ENCODE measurements at regions of chr13 and their contacts with region 1.

Region 1: DNA sequence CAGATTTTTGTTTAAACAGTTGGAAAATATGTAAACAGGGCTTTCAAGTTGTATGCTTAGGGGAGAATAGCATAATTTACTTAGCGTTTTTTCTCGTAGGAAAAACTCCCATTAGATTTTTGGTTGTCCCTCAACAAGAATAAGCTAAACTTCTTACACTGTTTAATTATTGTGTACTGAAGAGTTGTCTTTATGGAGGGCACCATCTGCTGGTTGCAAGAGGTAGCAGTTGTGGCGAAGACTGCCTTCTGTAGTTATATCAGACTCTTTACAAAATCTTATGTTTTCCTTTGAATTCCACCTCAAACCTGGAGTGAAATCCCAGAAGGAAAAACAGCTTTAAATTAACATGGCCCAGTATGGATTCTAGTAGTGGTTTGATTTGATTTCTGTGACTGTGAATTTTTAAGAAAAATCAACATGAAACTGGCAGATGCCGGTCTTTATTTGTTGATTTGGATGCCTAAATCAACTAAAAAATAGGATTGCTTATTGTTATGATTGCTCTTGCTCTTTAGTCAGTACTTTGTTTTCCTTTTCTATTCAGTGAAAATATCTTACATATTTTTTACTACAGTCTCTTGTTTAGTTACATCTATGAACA is 53.4 kb downstream of the PDS5B start:
- DNase-seq: peak; percentile 57
- ATAC-seq: peak; percentile 64
- H3K4me3 ChIP-seq: no peak overlapping the region
- H3K27ac ChIP-seq: no peak overlapping the region
- H3K4me1 ChIP-seq: peaks cover 16% of the 10 kb centered on the region
- H3K27me3 ChIP-seq: no peaks in the 10 kb centered on the region
- CTCF ChIP-seq: peak; percentile 81

Region 2: GRCh38 chr13:32159137-32159869 is 480.3 kb before region 1 on chr13:
- CTCF ChIA-PET with region 1: no interaction called
- POLR2A ChIA-PET with region 1: no interaction called
- intact Hi-C with region 1: no loop called
- DNase-seq: no peak
- ATAC-seq: no peak
- H3K4me3 ChIP-seq: no peak overlapping the region
- H3K27ac ChIP-seq: no peak overlapping the region
- H3K4me1 ChIP-seq: peaks cover 12% of the 10 kb centered on the region; the same call in 1 of the 2 replicates
- H3K27me3 ChIP-seq: no peaks in the 10 kb centered on the region
- CTCF ChIP-seq: no peak

Region 3: GRCh38 chr13:32538621-32539246 is 100.9 kb before region 1 on chr13 and contains the start of gene N4BP2L2:
- CTCF ChIA-PET with region 1: no interaction called
- POLR2A ChIA-PET with region 1: no interaction called
- intact Hi-C with region 1: loop called (anchors 5 kb)
- DNase-seq: peak; percentile 95
- ATAC-seq: peak; percentile 99
- H3K4me3 ChIP-seq: peak within 1 kb of the TSS; percentile 85
- H3K27ac ChIP-seq: peak within 1 kb of the TSS; percentile 65
- H3K4me1 ChIP-seq: peaks cover 20% of the 10 kb centered on the region; the same call in 1 of the 2 replicates
- H3K27me3 ChIP-seq: no peaks in the 10 kb centered on the region
- CTCF ChIP-seq: peak; percentile 45; the same call in 1 of the 2 replicates
- total RNA-seq, gene N4BP2L2: 31.7 and 51.4 TPM in 2 replicates

Region 4: DNA sequence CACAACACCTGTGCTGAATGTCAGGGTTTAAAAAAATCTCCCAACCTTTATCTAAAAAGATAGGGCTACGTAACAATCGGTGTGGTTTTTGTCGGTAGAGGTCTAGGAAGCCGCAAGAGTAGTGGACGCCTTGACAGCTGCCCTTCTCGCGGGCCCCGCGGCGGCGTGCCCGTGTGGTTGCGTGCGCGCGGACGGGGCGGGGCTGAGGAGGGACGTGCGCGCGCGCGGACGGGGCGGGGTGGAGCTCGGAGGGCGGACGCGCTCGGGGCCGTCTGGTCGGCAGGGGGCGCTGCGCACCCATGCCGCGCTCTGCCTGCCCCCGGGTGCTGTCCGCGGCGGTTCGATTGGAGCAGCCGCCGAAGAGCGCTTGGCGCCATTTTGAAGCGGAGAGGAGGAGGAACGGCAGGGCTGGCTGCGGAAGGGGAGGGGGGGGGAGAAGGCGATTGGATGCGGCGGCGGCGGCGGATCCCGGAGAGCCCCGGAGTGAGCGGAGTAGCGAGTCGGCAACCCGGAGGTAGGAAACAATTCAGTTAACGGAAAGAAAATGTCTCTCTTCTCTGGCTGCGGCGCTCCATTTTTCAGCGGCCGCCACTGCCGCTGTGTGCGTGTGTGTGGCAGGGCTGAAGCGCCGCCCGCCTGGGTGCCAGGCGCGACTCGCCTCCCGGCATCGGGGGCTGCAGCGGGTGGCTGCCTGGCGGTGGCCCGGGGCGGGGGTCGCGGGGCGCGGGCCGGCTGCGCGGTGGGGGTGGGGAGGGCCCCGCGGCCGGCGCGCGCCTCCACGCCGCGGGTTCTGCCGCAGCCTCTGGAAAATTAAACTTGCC is 53.3 kb before region 1 on chr13 and contains the start of gene PDS5B:
- CTCF ChIA-PET with region 1: interaction called, 24 read pairs
- POLR2A ChIA-PET with region 1: interaction called, 3 read pairs
- intact Hi-C with region 1: loop called (anchors 1 kb)
- DNase-seq: peak; percentile 92
- ATAC-seq: peak; percentile 84
- H3K4me3 ChIP-seq: peak within 1 kb of the TSS; percentile 96
- H3K27ac ChIP-seq: peak within 1 kb of the TSS; percentile 63
- H3K4me1 ChIP-seq: peaks cover 23% of the 10 kb centered on the region
- H3K27me3 ChIP-seq: no peaks in the 10 kb centered on the region
- CTCF ChIP-seq: peak; percentile 74
- total RNA-seq, gene PDS5B: 19.5 and 20.3 TPM in 2 replicates

Region 5: GRCh38 chr13:32713397-32713796 is 73.8 kb after region 1 on chr13:
- CTCF ChIA-PET with region 1: no interaction called
- POLR2A ChIA-PET with region 1: no interaction called
- intact Hi-C with region 1: no loop called
- DNase-seq: no peak
- ATAC-seq: no peak
- H3K4me3 ChIP-seq: no peak overlapping the region
- H3K27ac ChIP-seq: no peak overlapping the region
- H3K4me1 ChIP-seq: no peaks in the 10 kb centered on the region
- H3K27me3 ChIP-seq: no peaks in the 10 kb centered on the region
- CTCF ChIP-seq: no peak

Region 6: GRCh38 chr13:33123066-33123859 is 483.7 kb after region 1 on chr13:
- CTCF ChIA-PET with region 1: no interaction called
- POLR2A ChIA-PET with region 1: no interaction called
- intact Hi-C with region 1: no loop called
- DNase-seq: no peak
- ATAC-seq: no peak
- H3K4me3 ChIP-seq: no peak overlapping the region
- H3K27ac ChIP-seq: no peak overlapping the region
- H3K4me1 ChIP-seq: peaks cover 53% of the 10 kb centered on the region
- H3K27me3 ChIP-seq: no peaks in the 10 kb centered on the region
- CTCF ChIP-seq: no peak